Naive thymus-derived CD4-positive, alpha-beta T cell (primary cell): ENCODE measurements at regions of chr5 and their contacts with region 1.

Region 1: DNA sequence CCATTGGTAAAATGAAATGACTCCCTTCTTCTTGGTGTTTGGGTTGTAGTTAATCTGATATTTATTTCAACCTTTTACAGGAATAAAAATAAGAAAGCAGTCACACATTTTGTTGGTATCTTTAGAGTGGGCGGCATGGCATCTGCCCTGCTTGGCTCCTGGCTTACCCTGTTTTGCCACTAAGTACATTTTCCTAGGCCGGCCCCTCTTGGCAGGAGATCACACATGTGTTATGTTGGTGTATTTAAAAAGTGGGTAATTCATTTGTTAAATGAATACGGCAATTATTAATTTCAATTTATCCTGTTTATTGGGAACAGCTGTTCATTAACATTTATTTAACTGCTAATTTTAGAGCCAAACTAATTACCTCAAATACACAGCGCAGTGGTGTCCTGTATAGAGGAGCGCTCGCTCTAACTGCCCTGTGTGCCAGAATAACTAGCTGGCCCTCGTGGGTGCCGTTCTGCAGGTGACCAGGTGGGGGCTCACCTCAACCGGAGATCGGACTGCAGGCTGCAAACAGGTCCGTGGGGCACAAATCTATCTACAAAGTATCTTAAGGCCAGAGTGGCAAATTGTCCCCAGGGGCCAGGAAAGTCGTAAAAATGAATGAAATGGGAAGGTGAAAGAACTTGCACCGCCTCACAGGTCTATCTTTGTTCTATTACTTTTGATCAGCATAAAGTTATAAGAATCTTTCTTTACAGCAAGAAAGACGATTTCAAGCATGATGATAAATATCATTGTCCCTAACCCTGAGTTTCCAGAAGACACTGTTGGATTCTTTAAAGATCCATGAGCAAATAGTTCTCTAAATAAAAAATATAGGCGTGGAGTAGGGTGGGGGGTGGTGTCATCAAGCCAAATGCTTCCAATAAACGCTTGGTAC is 26.2 kb upstream of the GPR151 start:
- DNase-seq: peak; percentile 23 to 72 (median 51)
- ATAC-seq: peak; percentile 86
- H3K4me3 ChIP-seq: no peak overlapping the region
- H3K4me3 Mint-ChIP-seq: no peak overlapping the region
- H3K27ac ChIP-seq: no peak overlapping the region
- H3K27ac Mint-ChIP-seq: no peak overlapping the region
- H3K4me1 ChIP-seq: no peaks in the 10 kb centered on the region
- H3K4me1 Mint-ChIP-seq: peaks cover 0 to 5% (median 0%) of the 10 kb centered on the region in 7 donors
- H3K27me3 ChIP-seq: no peaks in the 10 kb centered on the region
- H3K27me3 Mint-ChIP-seq: peaks cover 0 to 4% (median 0%) of the 10 kb centered on the region in 5 donors

Region 2: DNA sequence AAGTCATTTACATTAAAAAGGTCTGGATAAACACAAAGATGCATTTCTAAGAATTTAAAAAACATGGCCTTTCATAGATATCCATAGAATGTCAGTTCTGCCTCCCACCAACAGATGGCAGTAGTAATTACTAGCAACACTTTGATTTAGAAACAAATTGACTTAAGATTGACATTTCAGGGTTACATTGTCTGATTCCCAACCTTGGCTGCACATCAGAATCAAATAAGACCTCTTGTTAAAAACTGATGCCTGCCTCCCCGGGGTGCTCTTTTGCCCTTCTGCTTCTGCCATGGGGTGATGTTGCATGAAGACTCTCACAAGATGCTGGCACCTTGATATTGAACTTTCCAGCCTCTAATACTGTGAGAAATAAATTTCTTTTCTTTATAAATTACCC is 120.0 kb after region 1 on chr5:
- CTCF ChIA-PET with region 1: no interaction called
- POLR2A ChIA-PET with region 1: no interaction called
- intact Hi-C with region 1: loop called (anchors 1 to 5 kb)
- DNase-seq: peak in 6 of 9 donors; percentile 2 to 53 (median 39)
- ATAC-seq: no peak
- H3K4me3 ChIP-seq: no peak overlapping the region
- H3K4me3 Mint-ChIP-seq: no peak overlapping the region
- H3K27ac ChIP-seq: no peak overlapping the region
- H3K27ac Mint-ChIP-seq: no peak overlapping the region
- H3K4me1 ChIP-seq: no peaks in the 10 kb centered on the region
- H3K4me1 Mint-ChIP-seq: peaks cover 0 to 16% (median 4%) of the 10 kb centered on the region in 7 donors
- H3K27me3 ChIP-seq: no peaks in the 10 kb centered on the region
- H3K27me3 Mint-ChIP-seq: peaks cover 0 to 1% (median 0%) of the 10 kb centered on the region in 5 donors

Region 3: DNA sequence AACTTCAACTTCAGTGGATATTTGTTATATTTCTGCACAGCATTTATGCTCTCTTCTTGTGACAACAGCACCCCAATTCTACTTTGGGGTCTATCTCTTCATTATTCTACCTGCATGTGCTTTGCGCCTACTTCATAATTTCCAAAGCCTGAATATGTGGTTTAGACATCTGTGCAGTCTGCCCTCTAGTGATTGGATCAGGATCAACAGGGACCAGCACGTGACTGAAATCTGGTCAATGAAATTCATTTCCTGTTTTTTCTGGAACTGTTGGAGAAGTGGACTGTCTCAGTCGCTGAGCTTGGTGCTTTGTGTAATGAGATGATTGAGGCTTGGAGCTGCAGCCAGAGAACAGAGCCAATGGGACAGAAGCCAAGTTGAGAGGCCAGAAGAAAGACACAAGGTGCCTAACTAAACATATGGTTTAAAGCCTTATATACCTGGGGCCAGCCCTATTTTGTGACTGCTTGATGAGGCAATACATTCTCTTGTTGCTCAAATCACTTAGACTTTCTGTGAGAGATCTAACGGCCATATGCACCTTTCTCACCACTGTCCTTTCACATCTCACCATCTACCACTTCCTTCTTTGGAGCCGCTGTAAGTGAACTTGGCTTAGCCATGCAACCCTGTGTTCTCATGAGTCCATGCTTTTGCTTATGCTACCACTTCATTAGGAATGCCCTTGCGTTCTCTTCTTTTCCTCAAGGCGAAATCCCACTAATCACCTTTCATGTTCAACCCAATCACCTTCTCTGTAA is 405.2 kb after region 1 on chr5:
- CTCF ChIA-PET with region 1: no interaction called
- POLR2A ChIA-PET with region 1: no interaction called
- intact Hi-C with region 1: loop called in 1 of 2 experiments (anchors 5 kb)
- DNase-seq: peak in 1 of 9 donors; percentile 4
- ATAC-seq: peak; percentile 34
- H3K4me3 ChIP-seq: no peak overlapping the region
- H3K4me3 Mint-ChIP-seq: no peak overlapping the region
- H3K27ac ChIP-seq: no peak overlapping the region
- H3K27ac Mint-ChIP-seq: peak overlapping the region in 1 of 9 donors; percentile 24
- H3K4me1 ChIP-seq: no peaks in the 10 kb centered on the region
- H3K4me1 Mint-ChIP-seq: peaks cover 0 to 7% (median 0%) of the 10 kb centered on the region in 7 donors
- H3K27me3 ChIP-seq: no peaks in the 10 kb centered on the region
- H3K27me3 Mint-ChIP-seq: peaks cover 0 to 9% (median 0%) of the 10 kb centered on the region in 5 donors

Region 4: DNA sequence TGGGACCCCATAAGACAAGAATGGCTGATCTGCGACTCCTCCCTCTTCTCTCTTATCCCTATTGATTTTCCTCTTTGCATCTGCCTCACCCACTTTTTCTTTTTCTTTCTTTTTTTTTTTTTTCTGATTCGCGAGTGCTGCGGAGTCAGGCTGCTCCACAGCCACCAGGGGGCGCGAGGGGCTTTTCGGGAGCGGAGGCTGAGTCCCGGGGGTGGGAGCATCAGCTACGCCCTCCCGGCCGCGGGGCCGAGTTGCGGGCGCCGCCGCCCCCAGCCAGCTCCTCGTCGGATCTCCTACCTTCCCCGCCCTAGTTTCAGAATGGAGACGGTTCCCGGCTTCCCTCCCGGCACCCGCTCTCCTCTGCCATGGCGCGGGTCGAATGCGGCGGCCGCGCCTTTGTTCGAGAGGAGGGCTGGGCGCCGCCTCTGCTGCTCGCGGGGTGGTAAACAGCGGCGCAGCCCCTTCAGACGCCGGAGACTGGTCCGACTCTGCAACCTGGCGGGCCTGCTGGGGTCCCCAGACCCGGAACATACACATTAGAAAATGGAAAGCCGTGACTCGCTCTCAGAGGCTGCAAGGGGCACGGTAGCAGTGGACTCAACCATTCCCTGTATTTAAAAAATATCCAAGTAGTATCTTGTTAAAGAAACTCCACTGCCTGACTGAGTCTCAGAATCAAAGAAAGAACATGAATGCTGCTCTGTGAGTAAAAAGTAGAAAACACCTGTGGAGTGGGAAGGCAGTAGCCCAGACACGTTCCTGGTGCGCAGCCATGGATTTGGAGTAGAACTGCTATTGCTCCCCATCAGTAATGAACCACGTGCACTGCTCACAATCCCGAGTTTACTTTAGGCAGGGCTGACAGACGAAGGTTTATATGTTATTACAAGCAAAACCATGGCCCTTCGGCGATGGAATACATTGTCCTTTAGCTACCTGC is 911.9 kb after region 1 on chr5:
- CTCF ChIA-PET with region 1: no interaction called
- POLR2A ChIA-PET with region 1: no interaction called
- intact Hi-C with region 1: no loop called
- DNase-seq: peak; percentile 8 to 77 (median 48)
- ATAC-seq: peak; percentile 82
- H3K4me3 ChIP-seq: peak overlapping the region; percentile 27
- H3K4me3 Mint-ChIP-seq: peak overlapping the region; percentile 77 to 91 (median 82)
- H3K27ac ChIP-seq: no peak overlapping the region
- H3K27ac Mint-ChIP-seq: peak overlapping the region in 1 of 9 donors; percentile 52
- H3K4me1 ChIP-seq: no peaks in the 10 kb centered on the region
- H3K4me1 Mint-ChIP-seq: peaks cover 8 to 31% (median 18%) of the 10 kb centered on the region in 7 donors
- H3K27me3 ChIP-seq: peaks cover 0 to 4% of the 10 kb centered on the region in 2 donors
- H3K27me3 Mint-ChIP-seq: peaks cover 63 to 88% (median 82%) of the 10 kb centered on the region in 5 donors